ENCODE measurements at regions of chr14 and their contacts with region 1.

Region 1: GRCh38 chr14:31357279-31357678 is 63.1 kb downstream of the HEATR5A start:
- DNase-seq: no peak
- H3K4me3 ChIP-seq: no peak overlapping the region
- H3K27ac ChIP-seq: no peak overlapping the region
- H3K4me1 ChIP-seq: no peaks in the 10 kb centered on the region
- H3K27me3 ChIP-seq: no peaks in the 10 kb centered on the region
- CTCF ChIP-seq: no peak
- POLR2A ChIP-seq: no peak

Region 2: DNA sequence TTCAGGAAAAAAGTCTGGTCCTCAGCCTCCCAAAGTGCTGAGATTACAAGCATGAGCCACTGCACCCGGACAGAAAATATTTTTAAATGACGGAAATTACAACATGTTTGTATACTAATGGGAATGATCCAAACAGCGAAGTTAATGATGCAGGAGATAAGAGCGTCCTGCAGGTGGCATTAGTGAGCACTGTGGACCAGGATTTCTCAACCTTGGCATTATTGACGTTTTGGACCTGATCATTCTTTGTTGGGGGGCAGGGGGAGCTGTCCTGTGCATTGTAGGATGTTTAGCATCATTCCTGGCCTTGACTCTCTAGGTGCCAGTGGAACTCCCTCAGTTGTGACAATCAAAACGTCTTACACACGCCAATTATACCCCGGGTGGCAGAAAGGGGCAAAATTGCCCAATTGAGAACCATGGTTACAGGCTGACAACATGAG is 701.1 kb before region 1 on chr14:
- intact Hi-C with region 1: loop called (anchors 10 kb)
- DNase-seq: peak; percentile 7
- H3K4me3 ChIP-seq: no peak overlapping the region
- H3K27ac ChIP-seq: no peak overlapping the region
- H3K4me1 ChIP-seq: no peaks in the 10 kb centered on the region
- H3K27me3 ChIP-seq: no peaks in the 10 kb centered on the region
- CTCF ChIP-seq: peak; percentile 21 to 59 (median 56)
- POLR2A ChIP-seq: no peak

Region 3: GRCh38 chr14:30974628-30975027 is 382.7 kb before region 1 on chr14:
- intact Hi-C with region 1: loop called (anchors 10 kb)
- DNase-seq: no peak
- H3K4me3 ChIP-seq: no peak overlapping the region
- H3K27ac ChIP-seq: no peak overlapping the region
- H3K4me1 ChIP-seq: no peaks in the 10 kb centered on the region
- H3K27me3 ChIP-seq: no peaks in the 10 kb centered on the region
- CTCF ChIP-seq: no peak
- POLR2A ChIP-seq: no peak

Region 4: GRCh38 chr14:31106768-31107167 is 250.5 kb before region 1 on chr14:
- intact Hi-C with region 1: loop called (anchors 10 kb)
- DNase-seq: no peak
- H3K4me3 ChIP-seq: no peak overlapping the region
- H3K27ac ChIP-seq: no peak overlapping the region
- H3K4me1 ChIP-seq: no peaks in the 10 kb centered on the region
- H3K27me3 ChIP-seq: no peaks in the 10 kb centered on the region
- CTCF ChIP-seq: no peak
- POLR2A ChIP-seq: no peak